Vagina (tissue), 2 donors: ENCODE measurements at regions of chr2 and their contacts with region 1.

Region 1: GRCh38 chr2:148989882-148990493 is 48.5 kb upstream of the LYPD6B start:
- DNase-seq: no peak
- H3K4me3 ChIP-seq: no peak overlapping the region
- H3K27ac ChIP-seq: no peak overlapping the region
- H3K4me1 ChIP-seq: no peaks in the 10 kb centered on the region
- H3K27me3 ChIP-seq: no peaks in the 10 kb centered on the region
- CTCF ChIP-seq: peak in 2 of 3 experiments; percentile 68 to 72
- POLR2A ChIP-seq: no peak

Region 2: GRCh38 chr2:147945660-147946059 is 1044.3 kb before region 1 on chr2:
- intact Hi-C with region 1: loop called (anchors 10 kb)
- DNase-seq: no peak
- H3K4me3 ChIP-seq: no peak overlapping the region
- H3K27ac ChIP-seq: no peak overlapping the region
- H3K4me1 ChIP-seq: no peaks in the 10 kb centered on the region
- H3K27me3 ChIP-seq: no peaks in the 10 kb centered on the region
- CTCF ChIP-seq: no peak
- POLR2A ChIP-seq: no peak